ENCODE measurements at regions of chr1 and their contacts with region 1.

Region 1: DNA sequence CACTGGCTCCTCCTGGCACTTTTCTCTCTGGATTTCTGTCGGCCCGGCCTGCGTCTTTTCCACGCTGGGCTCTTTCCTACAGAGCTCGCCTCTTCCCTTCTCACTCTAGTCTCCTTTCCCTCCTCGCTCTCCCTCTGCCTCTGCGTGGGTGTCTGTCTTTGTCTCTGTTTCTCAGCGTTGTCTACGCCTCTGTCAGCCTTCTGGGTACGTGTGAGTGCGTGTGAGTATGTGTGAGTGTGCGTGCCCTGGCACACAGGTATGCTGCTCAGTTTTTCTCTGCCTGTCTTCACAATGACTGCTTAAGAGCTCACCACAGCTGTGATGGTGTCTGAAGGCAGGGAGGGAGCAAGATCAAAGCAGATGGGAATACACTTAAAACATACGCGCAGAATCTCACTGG is 77.7 kb downstream of the KIRREL1 start:
- DNase-seq: no peak
- H3K4me3 ChIP-seq: no peak overlapping the region
- H3K27ac ChIP-seq: peak overlapping the region; percentile 21
- H3K27me3 ChIP-seq: no peaks in the 10 kb centered on the region
- CTCF ChIP-seq: no peak

Region 2: GRCh38 chr1:157829711-157830110 is 241.4 kb before region 1 on chr1:
- CTCF ChIA-PET with region 1: no interaction called
- POLR2A ChIA-PET with region 1: no interaction called
- DNase-seq: no peak
- H3K4me3 ChIP-seq: no peak overlapping the region
- H3K27ac ChIP-seq: no peak overlapping the region
- H3K27me3 ChIP-seq: no peaks in the 10 kb centered on the region
- CTCF ChIP-seq: no peak

Region 3: DNA sequence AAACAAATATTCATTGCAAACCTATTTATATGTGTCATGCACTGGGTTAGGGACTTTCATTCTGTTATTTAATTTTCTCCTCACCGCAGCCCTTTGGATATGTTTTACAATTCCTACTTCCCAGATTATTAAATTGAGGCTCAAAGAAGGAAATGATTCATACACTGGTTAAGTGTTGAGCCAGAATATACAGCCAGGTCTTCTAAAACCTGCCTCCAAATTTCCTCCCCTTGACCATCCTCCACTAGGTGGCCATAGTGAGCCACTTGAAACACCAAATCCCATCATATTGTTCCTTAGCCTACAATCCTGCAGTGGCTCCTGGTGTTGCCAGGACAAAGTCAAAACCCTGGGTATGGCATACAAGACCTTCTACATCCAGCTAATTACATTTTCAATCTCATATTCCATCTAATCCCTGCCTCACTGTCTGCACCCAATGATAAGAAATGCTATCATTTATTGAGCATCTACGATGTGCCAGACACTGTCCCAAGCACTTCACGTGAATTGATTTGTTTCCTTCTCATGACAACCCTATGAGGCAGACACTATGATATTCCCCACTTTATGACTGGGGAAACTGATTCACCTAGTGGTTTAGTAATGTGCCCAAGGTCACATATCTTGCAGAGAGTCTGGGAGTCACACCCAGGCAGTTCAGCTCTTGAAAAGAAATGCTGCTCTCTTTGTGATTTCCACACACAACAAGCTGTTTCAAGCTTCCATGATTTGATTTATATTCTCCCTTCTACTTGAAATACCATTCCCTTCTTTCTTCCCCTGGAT is 101.2 kb before region 1 on chr1:
- CTCF ChIA-PET with region 1: interaction called, 19 read pairs
- POLR2A ChIA-PET with region 1: no interaction called
- DNase-seq: peak; percentile 65
- H3K4me3 ChIP-seq: no peak overlapping the region
- H3K27ac ChIP-seq: peak overlapping the region; percentile 94
- H3K27me3 ChIP-seq: peaks cover 3% of the 10 kb centered on the region
- CTCF ChIP-seq: peak; percentile 98

Measured in AG04450 (cell line).